ENCODE measurements at regions of chr19 and their contacts with region 1.

Region 1: DNA sequence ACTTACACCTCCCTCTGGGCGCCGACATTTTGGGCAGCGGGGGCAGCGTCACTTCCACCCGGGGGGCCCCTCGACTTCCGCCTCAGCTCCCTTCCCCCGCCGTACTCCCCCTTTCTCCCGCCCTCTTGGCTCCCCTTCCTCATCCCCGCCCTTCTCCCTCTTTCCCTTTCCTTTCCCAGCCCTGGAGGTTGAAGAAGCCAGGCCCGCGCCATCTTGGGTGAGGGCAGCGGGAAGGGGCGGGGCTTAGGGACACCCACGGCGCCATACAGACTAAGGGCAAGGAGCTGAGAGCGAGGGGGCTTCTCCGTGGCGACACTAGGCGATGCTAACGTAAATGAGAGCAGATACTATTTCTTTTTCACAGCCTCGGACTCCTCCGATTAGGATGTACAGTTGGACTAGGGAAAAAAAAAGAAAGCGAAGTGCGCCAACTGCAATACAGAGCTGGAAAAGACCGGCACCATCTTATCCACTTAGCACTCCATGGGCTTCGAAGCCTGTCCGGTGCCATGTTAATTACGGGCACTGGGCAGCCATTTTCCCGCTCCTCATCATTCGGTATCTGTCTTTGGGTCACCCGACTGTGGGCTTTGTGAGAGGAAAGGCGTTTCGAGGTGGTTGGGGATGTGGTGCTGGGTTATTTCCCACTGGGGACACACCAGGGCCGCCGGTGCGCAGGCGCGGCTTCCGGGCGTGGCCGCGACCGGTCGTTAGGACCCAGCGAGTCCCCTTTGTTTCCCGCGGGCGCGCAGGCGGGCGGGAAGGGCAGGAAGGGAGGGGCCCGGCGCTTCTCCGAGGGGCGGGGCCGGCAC is at the start of gene FIZ1:
- DNase-seq: peak; percentile 89 to 98 (median 94)
- ATAC-seq: peak; percentile 71
- H3K4me3 ChIP-seq: peak within 1 kb of the TSS; percentile 95
- H3K4me3 Mint-ChIP-seq: peak within 1 kb of the TSS; percentile 99
- H3K27ac ChIP-seq: peak within 1 kb of the TSS; percentile 95 to 97
- H3K27ac Mint-ChIP-seq: peak within 1 kb of the TSS; percentile 95
- H3K4me1 ChIP-seq: peaks cover 36% of the 10 kb centered on the region
- H3K4me1 Mint-ChIP-seq: peaks cover 26% of the 10 kb centered on the region
- H3K27me3 ChIP-seq: no peaks in the 10 kb centered on the region
- H3K27me3 Mint-ChIP-seq: no peaks in the 10 kb centered on the region
- CTCF ChIP-seq: no peak
- total RNA-seq, gene FIZ1: 5.5 to 7.3 TPM

Region 2: DNA sequence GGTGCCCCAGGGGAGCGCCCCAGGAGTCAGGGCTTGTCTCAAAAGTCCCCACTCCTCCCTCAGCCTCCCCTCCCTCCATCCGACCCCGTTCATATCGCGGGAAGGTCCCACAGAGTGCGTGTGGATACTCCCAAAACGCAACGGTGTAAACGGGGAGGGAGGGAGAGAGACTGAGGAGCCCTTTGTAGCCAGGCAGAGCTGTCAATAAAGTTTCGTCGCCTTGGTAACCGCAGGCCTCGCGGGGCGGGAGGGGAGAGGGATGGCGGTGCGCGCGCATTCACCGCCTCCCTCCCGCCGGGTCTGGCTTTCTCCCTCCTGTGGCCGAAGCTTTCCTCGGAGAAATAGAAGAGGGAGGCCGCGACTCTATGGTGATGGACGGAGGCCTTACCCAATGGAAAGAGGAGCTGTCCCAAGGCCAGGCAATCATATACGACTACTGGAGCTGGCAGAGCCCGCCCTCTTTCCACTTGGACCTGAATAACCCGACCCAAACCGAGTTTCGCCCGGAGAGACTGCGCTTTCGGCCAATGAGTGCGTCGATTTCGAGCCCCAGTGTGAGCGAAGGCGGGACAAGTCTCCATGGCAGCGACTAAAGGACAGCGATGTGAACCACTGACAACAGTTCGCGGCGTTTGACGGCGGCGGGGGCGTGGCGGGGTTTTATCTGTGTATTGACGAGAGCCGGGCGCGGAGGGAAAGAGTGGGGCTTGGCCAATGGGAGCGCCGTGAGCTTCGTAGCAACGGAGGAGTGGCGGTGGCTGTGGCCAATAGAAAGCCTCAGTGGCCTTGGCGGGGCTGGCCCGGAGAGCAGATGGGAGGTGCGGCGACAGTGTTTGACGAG is 260.4 kb before region 1 on chr19 and contains the start of gene KMT5C:
- CTCF ChIA-PET with region 1: no interaction called
- POLR2A ChIA-PET with region 1: interaction called, 8 read pairs
- intact Hi-C with region 1: loop called in 1 of 2 experiments (anchors 1 kb)
- DNase-seq: peak; percentile 100
- ATAC-seq: peak; percentile 73
- H3K4me3 ChIP-seq: peak within 1 kb of the TSS; percentile 71
- H3K4me3 Mint-ChIP-seq: peak within 1 kb of the TSS; percentile 98
- H3K27ac ChIP-seq: peak within 1 kb of the TSS; percentile 91 to 98
- H3K27ac Mint-ChIP-seq: peak within 1 kb of the TSS; percentile 99
- H3K4me1 ChIP-seq: peaks cover 32% of the 10 kb centered on the region
- H3K4me1 Mint-ChIP-seq: peaks cover 21% of the 10 kb centered on the region
- H3K27me3 ChIP-seq: peaks cover 3 to 4% of the 10 kb centered on the region in 2 experiments
- H3K27me3 Mint-ChIP-seq: peaks cover 22% of the 10 kb centered on the region
- CTCF ChIP-seq: peak; percentile 30
- total RNA-seq, gene KMT5C: 113 to 115 TPM

Region 3: DNA sequence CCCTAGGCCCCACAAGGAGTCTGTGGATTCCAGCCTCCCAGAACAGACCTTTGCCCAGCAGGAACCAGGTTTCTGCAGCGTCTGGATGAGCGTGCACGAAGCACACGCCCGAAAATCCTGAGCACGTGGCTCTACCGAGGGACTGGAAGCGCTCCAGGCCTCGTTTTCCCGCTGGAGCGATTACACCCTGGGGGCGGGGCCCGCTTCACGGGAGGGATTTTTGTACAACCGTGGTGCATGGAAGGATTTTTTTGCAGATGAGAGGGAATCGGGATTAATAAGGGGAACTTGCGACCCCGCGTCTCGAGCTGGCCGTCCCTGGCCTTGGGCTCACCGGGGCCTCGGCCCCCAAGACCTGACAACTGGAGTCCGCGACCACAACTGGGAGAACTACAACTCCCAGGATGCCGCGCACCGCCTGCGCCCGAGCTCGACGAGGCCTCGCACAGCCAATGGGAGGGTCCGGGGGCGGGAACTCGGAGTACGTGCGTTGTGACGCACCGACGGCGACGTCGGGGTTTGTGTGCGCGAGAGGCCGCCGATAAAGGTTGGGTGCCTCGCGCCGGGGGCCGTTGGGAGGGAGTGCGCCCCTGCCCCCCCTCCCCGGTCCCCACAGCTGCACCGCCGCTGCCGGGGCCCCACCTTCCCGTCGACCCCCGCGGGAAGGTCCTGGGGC is 123.4 kb before region 1 on chr19 and contains the start of gene ZNF628:
- CTCF ChIA-PET with region 1: interaction called, 3 read pairs
- POLR2A ChIA-PET with region 1: interaction called, 22 read pairs
- intact Hi-C with region 1: no loop called
- DNase-seq: peak; percentile 94 to 99 (median 98)
- ATAC-seq: peak; percentile 93
- H3K4me3 ChIP-seq: peak within 1 kb of the TSS; percentile 76
- H3K4me3 Mint-ChIP-seq: peak within 1 kb of the TSS; percentile 91
- H3K27ac ChIP-seq: peak within 1 kb of the TSS; percentile 72 to 77
- H3K27ac Mint-ChIP-seq: peak within 1 kb of the TSS; percentile 93
- H3K4me1 ChIP-seq: peaks cover 26% of the 10 kb centered on the region
- H3K4me1 Mint-ChIP-seq: peaks cover 38% of the 10 kb centered on the region
- H3K27me3 ChIP-seq: no peaks in the 10 kb centered on the region
- H3K27me3 Mint-ChIP-seq: no peaks in the 10 kb centered on the region
- CTCF ChIP-seq: no peak
- total RNA-seq, gene ZNF628: 26.6 to 27.2 TPM

Region 4: DNA sequence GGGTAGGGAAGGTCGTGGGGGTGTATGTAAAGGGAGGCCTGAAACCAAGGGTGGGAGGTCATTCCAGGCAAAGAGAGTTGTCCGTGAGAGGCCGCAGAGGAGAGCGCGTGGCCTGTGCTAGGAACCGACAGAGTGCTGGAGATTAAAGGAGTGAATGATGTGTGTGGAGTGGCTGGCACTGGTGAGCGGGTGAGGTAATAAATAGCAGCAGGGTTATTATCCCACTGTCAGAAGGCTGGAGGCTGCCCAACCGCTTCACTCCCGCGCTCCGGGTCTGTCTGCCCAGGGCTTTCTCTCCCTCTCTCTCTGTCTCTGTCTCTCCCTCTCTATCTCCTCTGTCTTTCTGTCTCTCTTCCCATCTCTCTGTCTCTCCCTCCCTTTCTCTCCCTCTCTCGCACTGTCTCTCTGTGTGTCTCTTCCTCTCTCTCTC is 36.4 kb before region 1 on chr19:
- CTCF ChIA-PET with region 1: no interaction called
- POLR2A ChIA-PET with region 1: no interaction called
- intact Hi-C with region 1: no loop called
- DNase-seq: no peak
- ATAC-seq: no peak
- H3K4me3 ChIP-seq: no peak overlapping the region
- H3K4me3 Mint-ChIP-seq: no peak overlapping the region
- H3K27ac ChIP-seq: no peak overlapping the region
- H3K27ac Mint-ChIP-seq: no peak overlapping the region
- H3K4me1 ChIP-seq: no peaks in the 10 kb centered on the region
- H3K4me1 Mint-ChIP-seq: no peaks in the 10 kb centered on the region
- H3K27me3 ChIP-seq: peaks cover 0 to 2% of the 10 kb centered on the region in 2 experiments
- H3K27me3 Mint-ChIP-seq: peaks cover 13% of the 10 kb centered on the region
- CTCF ChIP-seq: no peak

Region 5: GRCh38 chr19:55586976-55587668 is 12.6 kb before region 1 on chr19:
- CTCF ChIA-PET with region 1: no interaction called
- POLR2A ChIA-PET with region 1: interaction called, 23 read pairs
- intact Hi-C with region 1: loop called in 1 of 2 experiments (anchors 1 kb)
- DNase-seq: peak; percentile 85 to 96 (median 91)
- ATAC-seq: peak; percentile 95
- H3K4me3 ChIP-seq: peak overlapping the region; percentile 46
- H3K4me3 Mint-ChIP-seq: peak overlapping the region; percentile 90
- H3K27ac ChIP-seq: no peak overlapping the region
- H3K27ac Mint-ChIP-seq: peak overlapping the region; percentile 71
- H3K4me1 ChIP-seq: peaks cover 29% of the 10 kb centered on the region
- H3K4me1 Mint-ChIP-seq: peaks cover 41% of the 10 kb centered on the region
- H3K27me3 ChIP-seq: no peaks in the 10 kb centered on the region
- H3K27me3 Mint-ChIP-seq: no peaks in the 10 kb centered on the region
- CTCF ChIP-seq: no peak

Region 6: GRCh38 chr19:55643348-55644176 is 43.9 kb after region 1 on chr19 and contains the start of gene ZNF581:
- CTCF ChIA-PET with region 1: interaction called, 7 read pairs
- POLR2A ChIA-PET with region 1: interaction called, 17 read pairs
- intact Hi-C with region 1: loop called in 1 of 2 experiments (anchors 5 kb)
- DNase-seq: peak; percentile 63 to 92 (median 74)
- ATAC-seq: peak; percentile 54
- H3K4me3 ChIP-seq: peak within 1 kb of the TSS; percentile 78
- H3K4me3 Mint-ChIP-seq: peak within 1 kb of the TSS; percentile 89
- H3K27ac ChIP-seq: peak within 1 kb of the TSS; percentile 71 to 78
- H3K27ac Mint-ChIP-seq: peak within 1 kb of the TSS; percentile 88
- H3K4me1 ChIP-seq: peaks cover 77% of the 10 kb centered on the region
- H3K4me1 Mint-ChIP-seq: peaks cover 54% of the 10 kb centered on the region
- H3K27me3 ChIP-seq: no peaks in the 10 kb centered on the region
- H3K27me3 Mint-ChIP-seq: no peaks in the 10 kb centered on the region
- CTCF ChIP-seq: no peak
- total RNA-seq, gene ZNF581: 23.1 to 24.7 TPM